ENCODE measurements at regions of chr17 and their contacts with region 1.

Region 1: DNA sequence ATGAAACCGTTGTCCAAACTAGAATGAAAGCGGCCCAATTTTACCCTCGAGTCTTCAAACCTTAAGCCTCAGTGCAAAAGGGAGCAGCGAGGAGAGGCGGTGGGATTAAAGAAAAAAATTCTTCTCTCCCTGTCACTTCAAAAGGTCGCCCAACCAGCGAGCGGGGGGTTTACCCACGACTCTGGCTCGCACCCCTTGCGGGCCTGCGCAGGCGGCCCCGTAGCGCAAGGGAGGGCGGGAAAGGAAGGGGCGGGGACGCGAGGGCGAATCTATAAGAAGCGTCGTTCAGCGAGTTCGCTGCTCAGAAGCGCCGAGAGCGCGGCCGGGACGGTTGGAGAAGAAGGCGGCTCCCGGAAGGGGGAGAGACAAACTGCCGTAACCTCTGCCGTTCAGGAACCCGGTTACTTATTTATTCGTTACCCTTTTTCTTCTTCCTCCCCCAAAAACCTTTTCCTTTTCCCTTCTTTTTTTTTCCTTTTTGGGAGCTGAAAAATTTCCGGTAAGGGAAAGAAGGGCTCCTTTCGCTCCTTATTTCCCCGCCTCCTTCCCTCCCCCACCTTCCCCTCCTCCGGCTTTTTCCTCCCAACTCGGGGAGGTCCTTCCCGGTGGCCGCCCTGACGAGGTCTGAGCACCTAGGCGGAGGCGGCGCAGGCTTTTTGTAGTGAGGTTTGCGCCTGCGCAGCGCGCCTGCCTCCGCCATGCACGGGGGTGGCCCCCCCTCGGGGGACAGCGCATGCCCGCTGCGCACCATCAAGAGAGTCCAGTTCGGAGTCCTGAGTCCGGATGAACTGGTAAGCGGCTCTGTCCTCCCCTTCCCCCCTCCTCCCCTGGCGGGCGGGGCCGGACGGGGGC is at the start of gene POLR2A:
- DNase-seq: peak in 1 of 2 donors; percentile 100
- H3K4me3 ChIP-seq: peak within 1 kb of the TSS; percentile 53 to 64
- H3K27ac ChIP-seq: peak within 1 kb of the TSS; percentile 100
- H3K4me1 ChIP-seq: peaks cover 74% of the 10 kb centered on the region
- H3K27me3 ChIP-seq: no peaks in the 10 kb centered on the region
- CTCF ChIP-seq: no peak
- POLR2A ChIP-seq: peak; percentile 92 to 100
- total RNA-seq, gene POLR2A: 118 TPM

Region 2: GRCh38 chr17:7394452-7395191 is 89.7 kb before region 1 on chr17 and contains the start of gene PLSCR3:
- intact Hi-C with region 1: loop called (anchors 5 kb)
- DNase-seq: no peak
- H3K4me3 ChIP-seq: peak within 1 kb of the TSS; percentile 60 to 94
- H3K27ac ChIP-seq: peak within 1 kb of the TSS; percentile 86
- H3K4me1 ChIP-seq: peaks cover 23% of the 10 kb centered on the region
- H3K27me3 ChIP-seq: no peaks in the 10 kb centered on the region
- CTCF ChIP-seq: peak in 2 of 3 experiments; percentile 32 to 35
- POLR2A ChIP-seq: peak in 1 of 2 donors; percentile 92
- total RNA-seq, gene PLSCR3: 37.1 TPM

Region 3: DNA sequence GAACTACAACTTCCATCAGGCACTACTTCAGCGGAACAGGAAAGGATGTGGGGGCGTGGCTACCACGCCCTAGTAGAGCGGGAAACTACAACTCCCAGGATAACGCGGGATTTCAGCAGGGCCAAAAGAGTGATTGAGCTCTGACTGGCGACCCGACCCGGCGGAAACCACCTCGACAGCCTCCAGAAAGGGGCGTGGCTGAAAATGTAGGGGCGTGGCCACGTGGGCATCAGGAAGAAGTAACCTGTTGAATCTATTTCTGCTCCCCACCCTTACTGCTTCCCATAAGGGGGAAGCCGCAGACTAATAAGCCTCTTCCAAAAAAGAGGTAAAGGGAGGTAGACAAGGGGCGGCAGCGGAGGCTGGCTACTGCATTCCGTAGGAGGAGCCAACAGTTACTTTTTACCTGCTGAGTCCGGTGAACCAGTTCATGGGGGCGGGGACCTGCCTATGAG is 49.0 kb before region 1 on chr17 and contains the start of gene TMEM102:
- intact Hi-C with region 1: loop called (anchors 2 kb)
- DNase-seq: peak in 1 of 2 donors; percentile 95
- H3K4me3 ChIP-seq: peak within 1 kb of the TSS; percentile 34 to 49
- H3K27ac ChIP-seq: peak within 1 kb of the TSS; percentile 81
- H3K4me1 ChIP-seq: peaks cover 48% of the 10 kb centered on the region
- H3K27me3 ChIP-seq: no peaks in the 10 kb centered on the region
- CTCF ChIP-seq: no peak
- POLR2A ChIP-seq: peak in 1 of 2 donors; percentile 20
- total RNA-seq, gene TMEM102: 9.8 TPM